CD8-positive, alpha-beta T cell (primary cell): ENCODE measurements at regions of chr4 and their contacts with region 1.

Region 1: GRCh38 chr4:98150092-98150761 is 7.0 kb upstream of the STPG2 start:
- DNase-seq: peak in 2 of 9 experiments; percentile 9 to 29
- ATAC-seq: no peak
- H3K4me3 ChIP-seq: no peak overlapping the region
- H3K4me3 Mint-ChIP-seq: no peak overlapping the region
- H3K27ac ChIP-seq: no peak overlapping the region
- H3K27ac Mint-ChIP-seq: no peak overlapping the region
- H3K4me1 ChIP-seq: no peaks in the 10 kb centered on the region
- H3K4me1 Mint-ChIP-seq: peaks cover 11% of the 10 kb centered on the region
- H3K27me3 ChIP-seq: peaks cover 0 to 2% of the 10 kb centered on the region in 2 experiments
- H3K27me3 Mint-ChIP-seq: peaks cover 2% of the 10 kb centered on the region
- CTCF ChIP-seq: peak; percentile 44

Region 2: GRCh38 chr4:98055800-98056501 is 94.3 kb before region 1 on chr4:
- CTCF ChIA-PET with region 1: no interaction called
- POLR2A ChIA-PET with region 1: no interaction called
- intact Hi-C with region 1: no loop called
- DNase-seq: no peak
- ATAC-seq: no peak
- H3K4me3 ChIP-seq: no peak overlapping the region
- H3K4me3 Mint-ChIP-seq: no peak overlapping the region
- H3K27ac ChIP-seq: no peak overlapping the region
- H3K27ac Mint-ChIP-seq: no peak overlapping the region
- H3K4me1 ChIP-seq: no peaks in the 10 kb centered on the region
- H3K4me1 Mint-ChIP-seq: no peaks in the 10 kb centered on the region
- H3K27me3 ChIP-seq: no peaks in the 10 kb centered on the region
- H3K27me3 Mint-ChIP-seq: peaks cover 10% of the 10 kb centered on the region
- CTCF ChIP-seq: no peak

Region 3: DNA sequence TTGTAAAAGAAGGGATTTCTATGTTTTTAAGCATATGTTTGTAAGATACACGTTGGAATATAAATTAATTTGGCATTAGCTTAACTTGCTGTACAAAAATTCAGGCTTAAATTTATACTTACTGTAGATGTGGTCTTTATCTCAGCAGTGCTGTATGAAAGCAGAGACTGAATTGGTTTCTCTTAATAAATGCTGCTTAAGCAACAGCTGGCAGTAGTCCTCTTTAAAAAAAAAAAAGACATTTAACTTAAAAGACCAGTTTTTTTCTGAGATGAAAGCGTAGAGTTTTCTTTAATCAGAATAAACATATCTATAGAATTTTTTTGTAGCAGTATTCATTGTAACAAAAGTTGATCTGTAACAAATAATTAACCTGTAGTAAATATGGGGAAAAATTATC is 235.6 kb after region 1 on chr4:
- CTCF ChIA-PET with region 1: no interaction called
- POLR2A ChIA-PET with region 1: no interaction called
- intact Hi-C with region 1: loop called in 1 of 2 experiments (anchors 5 kb)
- DNase-seq: no peak
- ATAC-seq: no peak
- H3K4me3 ChIP-seq: no peak overlapping the region
- H3K4me3 Mint-ChIP-seq: no peak overlapping the region
- H3K27ac ChIP-seq: no peak overlapping the region
- H3K27ac Mint-ChIP-seq: no peak overlapping the region
- H3K4me1 ChIP-seq: no peaks in the 10 kb centered on the region
- H3K4me1 Mint-ChIP-seq: no peaks in the 10 kb centered on the region
- H3K27me3 ChIP-seq: no peaks in the 10 kb centered on the region
- H3K27me3 Mint-ChIP-seq: no peaks in the 10 kb centered on the region
- CTCF ChIP-seq: no peak

Region 4: GRCh38 chr4:98828801-98829200 is 678.6 kb after region 1 on chr4:
- CTCF ChIA-PET with region 1: no interaction called
- POLR2A ChIA-PET with region 1: no interaction called
- intact Hi-C with region 1: loop called (anchors 2 to 5 kb)
- DNase-seq: peak in 7 of 9 experiments; percentile 14 to 56 (median 38)
- ATAC-seq: no peak
- H3K4me3 ChIP-seq: no peak overlapping the region
- H3K4me3 Mint-ChIP-seq: no peak overlapping the region
- H3K27ac ChIP-seq: no peak overlapping the region
- H3K27ac Mint-ChIP-seq: no peak overlapping the region
- H3K4me1 ChIP-seq: no peaks in the 10 kb centered on the region
- H3K4me1 Mint-ChIP-seq: no peaks in the 10 kb centered on the region
- H3K27me3 ChIP-seq: peaks cover 0 to 3% of the 10 kb centered on the region in 2 experiments
- H3K27me3 Mint-ChIP-seq: no peaks in the 10 kb centered on the region
- CTCF ChIP-seq: no peak

Region 5: GRCh38 chr4:99405433-99406115 is 1255.3 kb after region 1 on chr4:
- CTCF ChIA-PET with region 1: interaction called, 3 read pairs
- POLR2A ChIA-PET with region 1: no interaction called
- intact Hi-C with region 1: loop called (anchors 1 kb)
- DNase-seq: peak; percentile 34 to 71 (median 56)
- ATAC-seq: peak; percentile 70
- H3K4me3 ChIP-seq: no peak overlapping the region
- H3K4me3 Mint-ChIP-seq: no peak overlapping the region
- H3K27ac ChIP-seq: no peak overlapping the region
- H3K27ac Mint-ChIP-seq: no peak overlapping the region
- H3K4me1 ChIP-seq: no peaks in the 10 kb centered on the region
- H3K4me1 Mint-ChIP-seq: no peaks in the 10 kb centered on the region
- H3K27me3 ChIP-seq: no peaks in the 10 kb centered on the region
- H3K27me3 Mint-ChIP-seq: no peaks in the 10 kb centered on the region
- CTCF ChIP-seq: peak; percentile 93